MCF 10A (cell line): ENCODE measurements at regions of chr14 and their contacts with region 1.

Region 1: DNA sequence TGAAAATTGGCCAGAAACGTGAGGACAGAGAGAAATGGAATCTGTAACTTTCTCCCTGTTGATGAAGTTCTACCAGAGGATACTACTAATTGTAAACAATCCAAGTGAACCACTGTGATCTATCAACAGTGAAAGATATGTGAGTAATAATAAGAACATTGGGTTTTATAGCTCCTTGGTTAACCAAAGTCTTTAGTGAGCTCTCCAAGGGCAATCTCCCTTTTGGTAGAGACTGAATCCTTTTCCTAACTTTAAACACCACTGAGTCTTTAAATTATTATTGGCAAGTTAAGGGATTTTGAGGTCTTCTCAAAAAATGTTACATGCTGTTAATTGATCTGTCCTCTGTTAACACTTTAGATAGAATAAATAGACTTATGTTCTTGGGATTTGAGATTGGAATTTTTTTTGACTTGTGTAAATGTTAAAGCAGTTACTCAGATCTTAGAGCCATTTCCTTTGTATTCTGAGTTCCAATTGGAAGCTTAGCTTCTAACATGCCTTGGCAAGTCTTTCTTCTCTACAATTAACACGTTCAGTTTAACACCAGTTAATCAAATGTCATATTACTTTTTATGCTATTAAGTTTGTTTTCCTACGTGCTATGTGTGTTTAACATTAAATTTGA is 338.2 kb upstream of the DDHD1 start:
- DNase-seq: peak; percentile 4
- H3K4me3 Mint-ChIP-seq: no peak overlapping the region
- H3K27ac Mint-ChIP-seq: peak overlapping the region; percentile 94
- H3K4me1 Mint-ChIP-seq: peaks cover 17% of the 10 kb centered on the region
- H3K27me3 Mint-ChIP-seq: no peaks in the 10 kb centered on the region
- CTCF ChIP-seq: no peak

Region 2: GRCh38 chr14:53501361-53502211 is 10.2 kb after region 1 on chr14:
- CTCF ChIA-PET with region 1: interaction called, 3 read pairs
- POLR2A ChIA-PET with region 1: interaction called, 12 read pairs
- intact Hi-C with region 1: no loop called
- DNase-seq: peak; percentile 75
- H3K4me3 Mint-ChIP-seq: no peak overlapping the region
- H3K27ac Mint-ChIP-seq: no peak overlapping the region
- H3K4me1 Mint-ChIP-seq: peaks cover 25% of the 10 kb centered on the region
- H3K27me3 Mint-ChIP-seq: no peaks in the 10 kb centered on the region
- CTCF ChIP-seq: no peak

Region 3: GRCh38 chr14:53509276-53510244 is 18.2 kb after region 1 on chr14:
- CTCF ChIA-PET with region 1: no interaction called
- POLR2A ChIA-PET with region 1: interaction called, 22 read pairs
- intact Hi-C with region 1: no loop called
- DNase-seq: peak; percentile 93
- H3K4me3 Mint-ChIP-seq: peak overlapping the region; percentile 9
- H3K27ac Mint-ChIP-seq: peak overlapping the region; percentile 91
- H3K4me1 Mint-ChIP-seq: peaks cover 22% of the 10 kb centered on the region
- H3K27me3 Mint-ChIP-seq: no peaks in the 10 kb centered on the region
- CTCF ChIP-seq: no peak